ENCODE measurements at regions of chrX and their contacts with region 1.

Region 1: GRCh38 chrX:13658602-13659001 is 5.7 kb downstream of the TCEANC start:
- DNase-seq: no peak
- ATAC-seq: peak; percentile 34

Region 2: GRCh38 chrX:13598877-13599276 is 59.7 kb before region 1 on chrX:
- intact Hi-C with region 1: no loop called
- DNase-seq: no peak
- ATAC-seq: no peak

Region 3: DNA sequence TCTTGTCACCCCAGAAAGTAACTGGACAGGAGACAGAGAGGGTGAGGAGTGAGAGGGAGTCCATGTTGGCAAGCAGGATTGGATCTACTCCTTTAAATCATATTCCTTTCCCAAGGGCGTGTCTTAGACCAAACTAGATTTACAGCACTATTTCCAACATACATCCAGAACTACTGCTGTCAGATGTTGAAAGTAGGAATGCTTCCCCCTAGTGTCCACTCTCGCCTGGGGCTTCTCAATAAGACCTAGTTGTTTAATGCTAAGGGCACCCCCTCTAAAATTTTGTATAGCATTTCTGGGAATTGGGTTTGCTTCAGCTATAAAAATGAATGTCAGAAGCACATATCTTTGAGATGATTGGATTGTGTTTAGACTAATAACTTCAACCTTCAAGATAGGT is 89.2 kb after region 1 on chrX:
- intact Hi-C with region 1: loop called (anchors 2 kb)
- DNase-seq: no peak
- ATAC-seq: no peak

Region 4: GRCh38 chrX:13876652-13877051 is 218.1 kb after region 1 on chrX:
- intact Hi-C with region 1: no loop called
- DNase-seq: no peak
- ATAC-seq: no peak